ENCODE measurements at regions of chr2 and their contacts with region 1.

Region 1: DNA sequence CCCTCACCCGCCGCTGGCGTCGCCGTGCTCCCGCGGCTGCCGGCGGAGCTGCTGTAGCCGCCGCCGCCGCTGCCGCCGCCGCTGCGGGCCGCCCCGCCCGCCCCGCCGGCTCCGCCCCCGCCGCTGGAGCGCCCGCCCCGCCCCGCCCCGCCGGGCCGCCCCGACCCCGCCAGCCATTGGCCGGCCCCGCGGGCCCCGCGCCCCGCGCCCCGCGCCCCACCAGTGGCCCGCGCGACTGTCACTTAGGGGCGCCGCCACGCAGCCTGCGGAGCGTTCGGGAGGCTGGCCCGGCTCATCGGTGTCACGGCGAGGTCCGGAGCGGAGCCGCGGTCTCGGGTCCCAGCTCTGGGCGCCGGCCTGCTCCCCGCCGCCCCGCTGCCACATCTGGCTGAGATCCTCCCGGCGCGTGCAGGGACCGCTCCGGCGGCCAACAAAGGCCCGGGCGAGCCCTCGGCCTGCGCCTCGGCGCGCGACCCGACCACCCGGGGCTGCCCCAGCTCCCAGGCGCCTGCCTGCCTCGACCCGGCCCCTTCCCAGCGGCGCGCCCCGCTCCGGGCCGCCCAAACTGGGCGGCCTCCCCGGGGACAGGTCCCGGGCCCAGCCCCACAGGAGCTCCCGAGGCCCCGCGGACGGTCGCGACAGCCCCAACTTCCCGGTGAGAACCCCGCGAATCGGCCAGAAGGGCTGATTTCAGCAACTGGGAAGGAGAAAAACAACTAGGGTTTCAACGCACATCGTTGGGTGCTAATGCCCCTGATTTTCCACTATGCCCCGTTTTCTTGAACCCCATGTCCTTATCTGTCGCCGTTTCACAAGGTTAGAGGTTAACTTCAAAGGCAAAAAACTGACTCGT is at the start of gene MGAT4A:
- DNase-seq: peak; percentile 95
- H3K4me3 Mint-ChIP-seq: peak within 1 kb of the TSS; percentile 84
- H3K27ac Mint-ChIP-seq: peak within 1 kb of the TSS; percentile 88
- H3K4me1 Mint-ChIP-seq: peaks cover 60% of the 10 kb centered on the region
- H3K27me3 Mint-ChIP-seq: no peaks in the 10 kb centered on the region
- total RNA-seq, gene MGAT4A: 48.8 and 49.2 TPM in 2 replicates

Region 2: DNA sequence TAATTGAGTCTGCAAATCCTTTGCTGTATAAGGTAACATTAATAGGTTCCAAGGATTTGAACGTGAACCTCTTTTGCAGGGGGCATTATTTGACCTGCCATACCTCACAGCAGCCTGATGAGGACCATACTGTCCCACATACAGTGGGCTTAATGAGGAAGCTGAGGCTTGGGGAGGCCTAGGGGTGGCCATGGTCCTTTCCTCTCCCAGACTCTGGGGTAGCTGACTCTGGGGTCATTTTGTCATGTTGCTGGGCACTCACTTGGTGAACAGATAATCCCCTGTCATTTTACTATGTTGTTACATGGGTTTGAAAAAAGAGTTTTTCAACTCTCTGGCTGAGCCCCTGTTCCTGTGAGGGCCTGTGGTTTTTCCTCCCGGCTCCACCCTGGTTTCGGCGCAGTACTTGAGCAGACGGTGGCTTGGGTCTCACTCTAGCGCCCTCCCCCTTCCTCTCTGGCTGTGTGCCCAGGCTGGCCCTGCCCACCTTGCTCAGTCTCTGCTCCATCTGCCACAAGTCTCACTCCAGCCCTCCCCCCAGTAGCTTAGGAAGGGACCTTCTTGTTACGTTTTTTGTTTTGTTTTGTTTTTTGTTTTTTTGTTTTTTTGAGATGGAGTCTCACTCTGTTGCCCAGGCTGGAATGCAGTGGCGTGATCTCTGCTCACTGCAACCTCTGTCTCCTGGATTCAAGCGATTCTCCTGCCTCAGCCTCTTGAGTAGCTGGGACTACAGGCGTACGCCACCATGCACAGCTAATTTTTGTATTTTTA is 265.6 kb before region 1 on chr2:
- intact Hi-C with region 1: loop called (anchors 10 kb)
- DNase-seq: peak; percentile 93
- H3K4me3 Mint-ChIP-seq: peak overlapping the region; percentile 71
- H3K27ac Mint-ChIP-seq: peak overlapping the region; percentile 89
- H3K4me1 Mint-ChIP-seq: peaks cover 76% of the 10 kb centered on the region
- H3K27me3 Mint-ChIP-seq: no peaks in the 10 kb centered on the region

Region 3: DNA sequence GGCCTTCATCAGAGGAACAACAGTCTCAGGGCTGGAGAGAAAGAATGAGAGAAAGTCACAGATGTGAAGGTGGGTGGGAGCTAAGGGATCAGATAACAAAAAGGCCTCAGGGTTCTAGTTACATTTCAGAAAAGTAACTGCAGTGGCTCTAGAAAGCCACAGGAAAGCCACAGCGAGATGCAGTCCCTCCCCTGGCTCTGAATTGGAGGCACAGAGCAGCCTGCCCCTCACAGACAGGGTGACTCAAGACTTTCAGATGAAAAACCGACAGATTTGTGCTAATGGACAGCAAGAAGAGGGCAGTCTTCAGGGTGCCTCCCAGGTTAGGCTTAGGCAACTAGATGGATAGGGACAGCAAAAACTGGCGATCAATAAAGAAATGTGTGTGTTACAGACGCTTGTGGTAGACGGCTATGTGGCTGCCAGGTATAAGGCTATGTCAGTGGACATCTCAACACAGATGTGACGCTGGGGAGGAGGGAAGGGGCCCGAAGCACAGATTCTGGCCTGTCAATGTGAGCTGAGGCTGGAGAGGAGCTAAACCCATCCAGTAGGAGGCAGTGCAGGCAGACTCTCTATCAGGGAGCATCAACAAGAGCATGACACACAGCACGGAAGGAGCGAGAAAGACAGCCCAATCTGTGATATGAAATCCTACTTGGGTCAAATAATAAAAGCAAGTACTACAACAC is 96.7 kb before region 1 on chr2:
- intact Hi-C with region 1: no loop called
- DNase-seq: peak; percentile 80
- H3K4me3 Mint-ChIP-seq: peak overlapping the region; percentile 42
- H3K27ac Mint-ChIP-seq: peak overlapping the region; percentile 82
- H3K4me1 Mint-ChIP-seq: peaks cover 30% of the 10 kb centered on the region
- H3K27me3 Mint-ChIP-seq: no peaks in the 10 kb centered on the region

Region 4: GRCh38 chr2:98664327-98664726 is 66.9 kb before region 1 on chr2:
- intact Hi-C with region 1: loop called (anchors 1 kb)
- DNase-seq: peak; percentile 88
- H3K4me3 Mint-ChIP-seq: peak overlapping the region; percentile 39
- H3K27ac Mint-ChIP-seq: peak overlapping the region; percentile 100
- H3K4me1 Mint-ChIP-seq: peaks cover 59% of the 10 kb centered on the region
- H3K27me3 Mint-ChIP-seq: no peaks in the 10 kb centered on the region

Region 5: GRCh38 chr2:98713332-98714015 is 17.8 kb before region 1 on chr2:
- intact Hi-C with region 1: loop called (anchors 2 kb)
- DNase-seq: no peak
- H3K4me3 Mint-ChIP-seq: no peak overlapping the region
- H3K27ac Mint-ChIP-seq: no peak overlapping the region
- H3K4me1 Mint-ChIP-seq: peaks cover 65% of the 10 kb centered on the region
- H3K27me3 Mint-ChIP-seq: no peaks in the 10 kb centered on the region

Region 6: GRCh38 chr2:98749066-98749450 is 17.8 kb after region 1 on chr2:
- intact Hi-C with region 1: no loop called
- DNase-seq: peak; percentile 58
- H3K4me3 Mint-ChIP-seq: peak overlapping the region; percentile 12
- H3K27ac Mint-ChIP-seq: no peak overlapping the region
- H3K4me1 Mint-ChIP-seq: peaks cover 38% of the 10 kb centered on the region
- H3K27me3 Mint-ChIP-seq: no peaks in the 10 kb centered on the region

Region 7: GRCh38 chr2:98830571-98831145 is 99.4 kb after region 1 on chr2:
- intact Hi-C with region 1: no loop called
- DNase-seq: peak; percentile 54
- H3K4me3 Mint-ChIP-seq: no peak overlapping the region
- H3K27ac Mint-ChIP-seq: no peak overlapping the region
- H3K4me1 Mint-ChIP-seq: peaks cover 55% of the 10 kb centered on the region
- H3K27me3 Mint-ChIP-seq: no peaks in the 10 kb centered on the region

Region 8: GRCh38 chr2:98883780-98884211 is 152.5 kb after region 1 on chr2:
- intact Hi-C with region 1: no loop called
- DNase-seq: no peak
- H3K4me3 Mint-ChIP-seq: no peak overlapping the region
- H3K27ac Mint-ChIP-seq: no peak overlapping the region
- H3K4me1 Mint-ChIP-seq: no peaks in the 10 kb centered on the region
- H3K27me3 Mint-ChIP-seq: peaks cover 10% of the 10 kb centered on the region

Region 9: GRCh38 chr2:99066075-99066958 is 335.1 kb after region 1 on chr2:
- intact Hi-C with region 1: loop called (anchors 10 kb)
- DNase-seq: peak; percentile 74
- H3K4me3 Mint-ChIP-seq: no peak overlapping the region
- H3K27ac Mint-ChIP-seq: no peak overlapping the region
- H3K4me1 Mint-ChIP-seq: no peaks in the 10 kb centered on the region
- H3K27me3 Mint-ChIP-seq: no peaks in the 10 kb centered on the region